ENCODE measurements at regions of chr19 and their contacts with region 1.

Region 1: DNA sequence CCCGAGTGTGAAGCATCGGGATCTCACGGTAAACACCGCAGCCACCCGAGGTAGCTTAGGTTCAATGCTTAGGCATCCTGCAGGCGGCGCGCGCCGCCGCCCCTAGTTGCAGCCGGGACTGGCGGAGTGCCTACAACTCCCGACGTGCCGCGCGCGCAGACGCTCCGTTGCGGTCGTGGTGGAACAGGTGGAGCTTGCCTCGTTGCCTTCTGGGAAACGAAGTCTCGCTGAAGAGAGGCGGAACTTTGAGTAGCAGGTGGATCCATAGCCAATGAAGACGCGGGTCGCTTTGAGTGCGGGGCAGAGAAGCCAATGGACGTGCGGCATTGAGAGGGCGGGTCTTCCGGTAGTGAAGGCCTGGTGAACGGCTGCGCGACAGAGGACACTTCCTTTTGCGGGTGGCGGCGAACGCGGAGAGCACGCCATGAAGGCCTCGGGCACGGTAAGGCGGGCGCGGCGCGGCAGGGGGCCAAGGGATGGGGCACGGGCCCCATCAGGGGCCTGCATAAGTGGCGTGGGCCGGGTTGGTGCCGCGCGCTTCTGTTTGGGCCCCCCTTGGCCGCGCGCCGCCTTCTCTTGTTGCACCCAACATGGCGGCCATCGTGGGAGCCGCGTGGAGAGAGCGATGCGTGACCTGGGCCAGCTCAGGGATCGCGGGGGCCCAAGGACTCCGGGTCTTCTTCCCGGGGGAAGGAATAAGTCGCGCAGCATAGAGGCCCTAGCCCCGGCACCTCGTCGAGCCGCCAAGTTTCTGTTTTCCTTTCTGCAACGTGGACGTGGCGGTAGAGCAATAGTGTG is at the start of gene RPL18A:
- DNase-seq: peak; percentile 100
- ATAC-seq: peak; percentile 97
- H3K4me3 Mint-ChIP-seq: peak within 1 kb of the TSS; percentile 91
- H3K27ac Mint-ChIP-seq: peak within 1 kb of the TSS; percentile 96
- H3K4me1 Mint-ChIP-seq: peaks cover 33% of the 10 kb centered on the region
- H3K27me3 Mint-ChIP-seq: peaks cover 2% of the 10 kb centered on the region
- total RNA-seq, gene RPL18A: 2,078 to 2,184 TPM

Region 2: DNA sequence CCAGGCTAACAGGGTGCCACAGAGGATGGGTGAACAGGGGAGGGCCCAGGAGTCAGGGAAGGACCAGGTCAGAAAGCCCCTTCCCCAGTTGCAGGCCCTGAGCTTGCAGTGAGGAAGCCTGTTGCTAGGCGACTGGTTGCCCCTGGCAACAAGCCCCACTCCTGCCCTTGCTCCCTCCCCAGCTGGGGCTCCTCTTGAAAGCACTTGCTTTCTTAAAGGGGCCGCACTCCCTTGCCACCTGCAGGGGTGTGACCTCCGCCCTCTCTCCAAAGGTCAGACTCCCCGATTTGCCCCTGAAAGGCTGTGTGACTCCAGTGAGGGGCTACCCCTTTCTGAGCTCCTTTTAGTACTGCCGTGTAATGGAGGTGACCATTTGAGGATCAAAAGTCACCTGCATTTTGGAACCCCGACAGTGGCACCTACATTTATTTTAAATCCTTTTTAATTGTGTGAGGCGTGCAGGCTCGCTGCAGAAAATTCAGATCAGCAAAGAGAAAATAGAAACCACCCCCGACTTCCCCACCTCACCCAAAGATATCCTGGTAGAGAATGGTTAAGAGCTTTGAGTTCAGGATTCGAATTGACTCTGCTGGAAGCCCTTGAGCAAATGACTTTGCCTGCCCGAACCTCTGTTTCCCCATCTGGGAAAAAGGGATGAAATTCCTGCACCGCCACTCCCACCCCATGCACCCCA is 103.6 kb before region 1 on chr19:
- CTCF ChIA-PET with region 1: interaction called, 12 read pairs
- POLR2A ChIA-PET with region 1: interaction called, 6 read pairs
- DNase-seq: peak; percentile 59
- ATAC-seq: no peak
- H3K4me3 Mint-ChIP-seq: no peak overlapping the region
- H3K27ac Mint-ChIP-seq: peak overlapping the region; percentile 70
- H3K4me1 Mint-ChIP-seq: peaks cover 39% of the 10 kb centered on the region
- H3K27me3 Mint-ChIP-seq: no peaks in the 10 kb centered on the region

Region 3: GRCh38 chr19:17803264-17803922 is 56.3 kb before region 1 on chr19:
- CTCF ChIA-PET with region 1: interaction called, 10 read pairs
- POLR2A ChIA-PET with region 1: no interaction called
- DNase-seq: peak; percentile 69
- ATAC-seq: peak; percentile 49
- H3K4me3 Mint-ChIP-seq: peak overlapping the region; percentile 51
- H3K27ac Mint-ChIP-seq: peak overlapping the region; percentile 86
- H3K4me1 Mint-ChIP-seq: peaks cover 41% of the 10 kb centered on the region
- H3K27me3 Mint-ChIP-seq: peaks cover 3% of the 10 kb centered on the region

Region 4: DNA sequence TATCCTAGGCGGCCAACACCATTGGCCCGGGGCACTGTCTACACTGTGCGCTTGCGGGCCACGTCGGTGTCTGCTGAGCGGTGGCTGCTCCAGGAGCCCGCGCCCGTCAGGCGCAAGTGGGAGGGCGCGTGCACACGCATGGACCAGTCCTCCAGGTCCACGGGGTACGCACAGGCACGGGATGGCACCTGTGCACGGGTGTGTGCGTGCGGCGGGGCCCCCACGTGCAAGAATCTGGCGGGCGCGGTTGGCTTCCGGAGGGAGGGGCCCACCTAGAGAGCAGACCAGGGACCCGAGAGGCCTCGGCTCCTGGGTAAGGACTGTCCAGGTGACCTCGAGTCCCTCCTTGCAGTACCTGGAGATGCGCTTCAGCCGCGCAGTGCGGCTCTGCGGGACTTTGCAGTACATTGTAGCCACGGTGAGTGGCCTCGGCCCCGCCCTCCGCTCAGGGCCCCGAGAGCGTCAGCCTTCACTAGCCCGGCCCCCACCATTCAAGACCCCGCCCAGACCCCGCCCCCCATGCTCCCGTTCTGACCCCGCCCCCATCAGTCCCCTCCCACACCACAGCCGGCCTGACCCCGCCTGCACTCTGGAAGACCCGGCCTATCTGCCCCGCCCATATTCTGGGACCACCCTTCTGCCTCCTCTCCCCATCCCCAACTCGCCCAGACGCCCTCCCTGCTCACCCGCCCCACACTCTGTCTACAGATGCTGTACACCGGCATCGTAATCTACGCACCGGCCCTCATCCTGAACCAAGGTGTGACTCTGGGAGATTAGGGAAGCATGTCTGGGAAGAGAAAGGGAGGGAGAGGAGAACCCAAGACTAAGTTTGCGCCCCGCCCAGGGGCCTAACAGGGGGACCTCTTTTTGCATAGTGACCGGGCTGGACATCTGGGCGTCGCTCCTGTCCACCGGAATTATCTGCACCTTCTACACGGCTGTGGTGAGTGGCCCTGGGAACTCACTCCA is 14.3 kb after region 1 on chr19:
- CTCF ChIA-PET with region 1: interaction called, 54 read pairs
- POLR2A ChIA-PET with region 1: interaction called, 23 read pairs
- DNase-seq: peak; percentile 79
- ATAC-seq: peak; percentile 72
- H3K4me3 Mint-ChIP-seq: peak overlapping the region; percentile 86
- H3K27ac Mint-ChIP-seq: peak overlapping the region; percentile 74
- H3K4me1 Mint-ChIP-seq: peaks cover 34% of the 10 kb centered on the region
- H3K27me3 Mint-ChIP-seq: no peaks in the 10 kb centered on the region

Region 5: DNA sequence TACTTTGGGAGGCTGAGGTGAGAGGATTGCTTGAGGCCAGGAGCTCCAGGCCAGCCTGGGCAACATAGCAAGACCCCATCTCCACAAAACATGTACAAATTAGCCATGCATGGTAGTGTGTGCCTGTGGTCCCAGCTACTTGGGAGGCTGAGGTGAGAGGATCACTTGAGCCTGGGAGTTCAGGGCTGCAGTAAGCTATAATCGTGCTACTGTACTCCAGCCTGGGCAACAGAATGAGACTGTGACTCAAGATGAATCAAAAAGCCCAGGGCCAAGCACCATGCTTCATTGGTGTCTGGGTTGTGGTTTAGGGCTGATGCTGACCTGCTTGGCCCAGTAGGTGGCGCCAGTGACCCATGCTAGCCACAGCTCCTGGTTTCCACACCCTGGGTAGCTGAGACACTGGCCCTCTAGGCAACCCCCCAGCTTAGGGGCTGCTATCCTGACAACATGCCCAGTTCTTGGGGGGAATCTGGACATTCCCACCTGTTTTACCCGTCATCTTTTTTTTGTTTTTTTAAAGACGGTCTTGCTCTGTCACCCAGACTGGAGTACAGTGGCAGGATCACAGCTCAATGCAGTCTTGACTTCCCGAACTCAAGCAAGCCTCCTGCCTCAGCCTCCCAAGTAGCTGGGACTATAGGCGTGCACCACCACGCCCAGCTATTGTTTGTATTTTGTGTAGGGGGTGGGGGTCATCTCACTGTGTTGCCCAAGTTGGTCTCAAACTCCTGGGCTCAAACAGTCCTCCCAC is 78.5 kb after region 1 on chr19:
- CTCF ChIA-PET with region 1: interaction called, 289 read pairs
- POLR2A ChIA-PET with region 1: interaction called, 69 read pairs
- DNase-seq: peak; percentile 88
- ATAC-seq: peak; percentile 93
- H3K4me3 Mint-ChIP-seq: no peak overlapping the region
- H3K27ac Mint-ChIP-seq: no peak overlapping the region
- H3K4me1 Mint-ChIP-seq: peaks cover 11% of the 10 kb centered on the region
- H3K27me3 Mint-ChIP-seq: no peaks in the 10 kb centered on the region

Region 6: GRCh38 chr19:18000935-18001778 is 141.4 kb after region 1 on chr19:
- CTCF ChIA-PET with region 1: interaction called, 27 read pairs
- POLR2A ChIA-PET with region 1: interaction called, 3 read pairs
- DNase-seq: peak; percentile 94
- ATAC-seq: peak; percentile 84
- H3K4me3 Mint-ChIP-seq: peak overlapping the region; percentile 92
- H3K27ac Mint-ChIP-seq: peak overlapping the region; percentile 100
- H3K4me1 Mint-ChIP-seq: peaks cover 31% of the 10 kb centered on the region
- H3K27me3 Mint-ChIP-seq: no peaks in the 10 kb centered on the region